CD8-positive, alpha-beta T cell (primary cell): ENCODE measurements at regions of chr7 and their contacts with region 1.

Region 1: GRCh38 chr7:110938165-110938564 is 152.8 kb upstream of the LRRN3 start:
- DNase-seq: no peak
- ATAC-seq: no peak
- H3K4me3 ChIP-seq: no peak overlapping the region
- H3K4me3 Mint-ChIP-seq: no peak overlapping the region
- H3K27ac ChIP-seq: no peak overlapping the region
- H3K27ac Mint-ChIP-seq: no peak overlapping the region
- H3K4me1 ChIP-seq: no peaks in the 10 kb centered on the region
- H3K4me1 Mint-ChIP-seq: peaks cover 10% of the 10 kb centered on the region
- H3K27me3 ChIP-seq: no peaks in the 10 kb centered on the region
- H3K27me3 Mint-ChIP-seq: no peaks in the 10 kb centered on the region
- CTCF ChIP-seq: no peak

Region 2: DNA sequence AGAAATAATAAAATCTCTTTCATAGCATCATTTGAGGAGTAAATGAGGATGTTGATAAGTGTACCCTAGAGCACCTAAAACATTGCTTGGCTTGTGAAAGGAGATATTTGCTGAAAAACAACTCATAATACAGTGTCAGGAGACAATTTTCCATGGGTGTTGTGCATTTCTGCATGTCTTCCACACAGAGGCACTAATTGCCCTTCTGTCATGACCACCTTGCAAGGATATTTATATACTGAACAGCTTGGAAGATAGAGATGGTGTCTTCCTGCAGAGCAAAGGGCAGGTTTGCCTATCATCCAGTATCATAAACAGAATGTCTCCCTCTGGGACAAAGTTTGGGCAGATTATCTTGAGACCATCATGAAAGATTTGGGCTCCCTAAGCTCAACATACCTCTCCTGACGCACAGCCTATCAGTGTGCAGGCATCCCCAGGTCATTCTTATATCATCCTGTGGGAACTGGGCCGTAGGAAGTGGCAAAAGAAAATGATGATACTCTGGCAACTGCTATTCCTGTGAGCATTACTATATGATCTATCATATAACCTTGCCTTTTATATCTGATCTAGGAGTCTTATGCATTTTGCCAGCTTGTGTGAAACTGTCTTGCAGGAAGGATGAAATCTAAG is 342.4 kb before region 1 on chr7:
- CTCF ChIA-PET with region 1: no interaction called
- POLR2A ChIA-PET with region 1: no interaction called
- intact Hi-C with region 1: loop called in 1 of 2 experiments (anchors 10 kb)
- DNase-seq: peak in 2 of 9 experiments; percentile 13 to 38
- ATAC-seq: no peak
- H3K4me3 ChIP-seq: no peak overlapping the region
- H3K4me3 Mint-ChIP-seq: no peak overlapping the region
- H3K27ac ChIP-seq: no peak overlapping the region
- H3K27ac Mint-ChIP-seq: no peak overlapping the region
- H3K4me1 ChIP-seq: no peaks in the 10 kb centered on the region
- H3K4me1 Mint-ChIP-seq: no peaks in the 10 kb centered on the region
- H3K27me3 ChIP-seq: no peaks in the 10 kb centered on the region
- H3K27me3 Mint-ChIP-seq: no peaks in the 10 kb centered on the region
- CTCF ChIP-seq: no peak

Region 3: GRCh38 chr7:110921595-110922151 is 16.5 kb before region 1 on chr7:
- CTCF ChIA-PET with region 1: interaction called, 3 read pairs
- POLR2A ChIA-PET with region 1: no interaction called
- intact Hi-C with region 1: loop called (anchors 2 kb)
- DNase-seq: no peak
- ATAC-seq: no peak
- H3K4me3 ChIP-seq: no peak overlapping the region
- H3K4me3 Mint-ChIP-seq: no peak overlapping the region
- H3K27ac ChIP-seq: no peak overlapping the region
- H3K27ac Mint-ChIP-seq: no peak overlapping the region
- H3K4me1 ChIP-seq: no peaks in the 10 kb centered on the region
- H3K4me1 Mint-ChIP-seq: no peaks in the 10 kb centered on the region
- H3K27me3 ChIP-seq: no peaks in the 10 kb centered on the region
- H3K27me3 Mint-ChIP-seq: no peaks in the 10 kb centered on the region
- CTCF ChIP-seq: no peak